Motor neuron (in vitro differentiated cells): ENCODE measurements at regions of chr14 and their contacts with region 1.

Region 1: DNA sequence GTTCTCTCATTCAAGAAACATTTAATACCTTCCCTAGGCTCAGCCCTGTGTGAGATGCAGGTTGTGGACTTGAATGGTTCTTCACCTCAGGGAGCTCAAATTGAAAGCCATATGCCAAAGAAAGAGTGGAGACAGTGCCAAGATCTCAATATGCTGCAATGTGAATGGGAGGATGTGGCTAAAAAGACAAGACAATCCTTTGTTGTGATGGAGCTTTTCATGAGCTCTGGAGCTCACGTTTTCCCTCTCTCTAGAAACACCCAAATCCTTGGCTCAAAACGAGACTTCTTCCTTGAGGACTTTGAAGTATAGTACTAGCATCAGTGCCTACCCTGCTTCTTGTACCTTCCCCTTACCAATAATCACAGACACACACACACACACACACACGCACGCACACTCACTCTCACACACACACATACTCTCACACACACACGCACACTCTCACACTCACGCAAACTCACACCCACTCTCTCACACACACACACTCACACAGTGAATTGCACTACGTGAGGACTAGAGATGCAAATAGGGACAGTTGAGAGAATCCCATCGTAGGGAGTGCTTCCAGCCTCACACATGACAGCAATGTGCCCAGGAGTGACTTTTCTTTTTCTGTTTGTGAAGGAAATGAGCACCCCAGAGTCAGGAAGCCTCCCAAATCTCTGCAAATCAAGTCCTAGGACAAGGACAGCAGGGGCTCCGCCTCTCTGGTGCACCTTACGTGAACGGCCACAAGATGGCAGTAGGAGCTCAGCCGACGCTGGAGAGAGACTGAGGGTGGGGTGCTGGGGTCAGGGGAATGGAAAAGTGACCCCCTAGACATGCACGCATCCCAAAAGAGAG is 231.4 kb downstream of the PCNX1 start:
- ATAC-seq: peak; percentile 61 to 95 (median 79)
- H3K4me3 ChIP-seq: no peak overlapping the region
- H3K27ac ChIP-seq: no peak overlapping the region
- H3K4me1 ChIP-seq: peaks cover 0 to 9% of the 10 kb centered on the region in 2 donors

Region 2: DNA sequence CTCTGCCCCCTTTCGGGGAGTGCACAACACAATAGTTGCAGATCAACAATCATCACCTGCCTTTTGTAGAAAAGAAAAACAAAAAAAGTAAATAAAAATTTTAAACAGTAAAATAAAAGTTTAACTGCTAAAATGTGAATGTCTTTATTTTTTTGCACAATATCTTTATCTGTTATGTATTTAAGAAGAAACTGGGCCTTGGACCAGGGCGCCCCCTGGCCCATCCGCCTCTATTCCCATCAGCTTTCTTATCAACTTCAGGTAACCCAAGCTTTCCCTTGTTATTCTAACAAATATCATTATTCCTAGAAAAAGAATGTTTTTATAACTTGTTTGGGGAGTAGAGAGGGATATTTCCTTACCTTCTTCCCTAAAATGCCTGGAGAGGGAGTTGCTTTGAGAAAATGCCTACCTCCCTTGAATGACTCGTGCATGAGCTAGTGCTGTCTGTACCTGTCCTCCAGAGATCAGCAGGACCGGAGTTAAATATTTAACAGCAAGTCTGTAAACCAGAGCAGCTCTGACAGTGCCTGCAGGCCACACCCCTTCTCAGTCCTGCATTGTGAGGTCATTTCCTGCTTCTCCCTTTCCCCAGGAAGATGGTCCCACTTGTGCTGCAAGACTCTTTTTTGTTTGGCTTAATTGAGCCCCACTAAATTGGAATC is 600.7 kb after region 1 on chr14:
- in situ Hi-C with region 1: loop called in 4 of 9 experiments (anchors 10 to 25 kb)
- ATAC-seq: peak in 5 of 8 experiments; percentile 44 to 80 (median 60)
- H3K4me3 ChIP-seq: no peak overlapping the region
- H3K27ac ChIP-seq: no peak overlapping the region
- H3K4me1 ChIP-seq: no peaks in the 10 kb centered on the region

Region 3: GRCh38 chr14:71753126-71753830 is 614.6 kb after region 1 on chr14:
- in situ Hi-C with region 1: loop called in 7 of 9 experiments (anchors 10 to 25 kb)
- ATAC-seq: peak; percentile 79 to 96 (median 89)
- H3K4me3 ChIP-seq: no peak overlapping the region
- H3K27ac ChIP-seq: no peak overlapping the region
- H3K4me1 ChIP-seq: peaks cover 5 to 7% of the 10 kb centered on the region in 2 donors